Calu3 (cell line): ENCODE measurements at regions of chr16 and their contacts with region 1.

Region 1: GRCh38 chr16:4253394-4254150 is 11.7 kb upstream of the SRL start:
- DNase-seq: peak; percentile 100
- H3K4me3 Mint-ChIP-seq: peak overlapping the region; percentile 95
- H3K27ac Mint-ChIP-seq: peak overlapping the region; percentile 96
- H3K4me1 Mint-ChIP-seq: no peaks in the 10 kb centered on the region
- H3K27me3 Mint-ChIP-seq: no peaks in the 10 kb centered on the region
- CTCF ChIP-seq: no peak

Region 2: DNA sequence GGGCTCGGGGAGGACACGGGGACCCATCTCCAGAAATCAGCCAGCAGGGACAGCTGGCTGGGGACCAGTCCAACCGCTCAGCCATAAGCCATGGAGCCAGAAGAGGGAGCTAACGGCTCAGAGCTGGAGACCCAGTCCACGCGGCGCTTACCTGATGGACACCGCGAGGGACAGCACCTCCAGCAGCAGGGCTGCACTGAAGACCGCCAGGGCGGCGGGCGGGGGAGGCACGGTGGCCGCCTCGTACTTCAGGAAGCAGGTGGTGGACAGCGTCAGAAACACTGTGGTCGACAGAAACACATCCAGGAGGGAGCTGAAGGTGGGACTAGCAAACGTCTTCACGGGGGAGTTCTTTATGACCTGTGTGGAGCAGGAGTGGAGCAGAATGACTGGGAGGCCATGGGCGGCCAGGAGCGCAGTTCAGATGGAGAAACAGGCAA is 270.5 kb before region 1 on chr16:
- CTCF ChIA-PET with region 1: interaction called, 33 read pairs
- intact Hi-C with region 1: loop called (anchors 5 kb)
- DNase-seq: peak; percentile 92
- H3K4me3 Mint-ChIP-seq: peak overlapping the region; percentile 46
- H3K27ac Mint-ChIP-seq: no peak overlapping the region
- H3K4me1 Mint-ChIP-seq: peaks cover 18% of the 10 kb centered on the region
- H3K27me3 Mint-ChIP-seq: no peaks in the 10 kb centered on the region
- CTCF ChIP-seq: peak; percentile 86

Region 3: DNA sequence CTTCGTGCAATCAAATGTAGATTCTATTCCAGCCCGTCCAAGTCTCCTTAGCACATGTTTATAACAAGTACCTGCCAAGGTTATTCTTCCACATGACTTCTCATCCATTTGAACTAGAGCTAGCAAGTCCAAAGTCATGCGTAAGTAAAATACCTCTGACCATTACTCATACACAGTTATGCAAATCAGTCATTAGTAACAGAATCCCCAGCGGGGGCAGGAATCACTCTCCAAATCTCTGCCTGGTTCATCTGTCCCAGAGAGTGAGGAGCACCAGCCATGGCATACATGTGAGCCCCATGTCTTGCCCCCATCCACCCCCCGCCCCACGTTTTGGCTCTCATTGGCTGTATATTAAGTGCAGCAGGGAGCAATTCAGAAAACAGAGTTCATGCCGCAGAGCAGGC is 39.4 kb before region 1 on chr16:
- CTCF ChIA-PET with region 1: interaction called, 31 read pairs
- intact Hi-C with region 1: no loop called
- DNase-seq: peak; percentile 70
- H3K4me3 Mint-ChIP-seq: no peak overlapping the region
- H3K27ac Mint-ChIP-seq: peak overlapping the region; percentile 95
- H3K4me1 Mint-ChIP-seq: peaks cover 20% of the 10 kb centered on the region
- H3K27me3 Mint-ChIP-seq: no peaks in the 10 kb centered on the region
- CTCF ChIP-seq: no peak

Region 4: GRCh38 chr16:4271176-4272066 is 17.8 kb after region 1 on chr16:
- CTCF ChIA-PET with region 1: interaction called, 41 read pairs
- intact Hi-C with region 1: no loop called
- DNase-seq: peak; percentile 96
- H3K4me3 Mint-ChIP-seq: peak overlapping the region; percentile 83
- H3K27ac Mint-ChIP-seq: peak overlapping the region; percentile 92
- H3K4me1 Mint-ChIP-seq: no peaks in the 10 kb centered on the region
- H3K27me3 Mint-ChIP-seq: no peaks in the 10 kb centered on the region
- CTCF ChIP-seq: no peak

Region 5: GRCh38 chr16:4402439-4403132 is 149.0 kb after region 1 on chr16:
- CTCF ChIA-PET with region 1: interaction called, 14 read pairs
- intact Hi-C with region 1: no loop called
- DNase-seq: peak; percentile 92
- H3K4me3 Mint-ChIP-seq: no peak overlapping the region
- H3K27ac Mint-ChIP-seq: no peak overlapping the region
- H3K4me1 Mint-ChIP-seq: no peaks in the 10 kb centered on the region
- H3K27me3 Mint-ChIP-seq: no peaks in the 10 kb centered on the region
- CTCF ChIP-seq: peak; percentile 99